ENCODE measurements at regions of chr12 and their contacts with region 1.

Region 1: GRCh38 chr12:40107098-40107802 is 1.4 kb upstream of the SLC2A13 start:
- DNase-seq: peak; percentile 69
- H3K4me3 Mint-ChIP-seq: peak overlapping the region; percentile 80
- H3K27ac Mint-ChIP-seq: peak overlapping the region; percentile 26
- H3K4me1 Mint-ChIP-seq: peaks cover 30% of the 10 kb centered on the region
- H3K27me3 Mint-ChIP-seq: peaks cover 47% of the 10 kb centered on the region

Region 2: GRCh38 chr12:38316391-38317129 is 1790.7 kb before region 1 on chr12 and contains the start of gene ALG10B:
- intact Hi-C with region 1: loop called (anchors 5 kb)
- DNase-seq: peak; percentile 90
- H3K4me3 Mint-ChIP-seq: peak within 1 kb of the TSS; percentile 97
- H3K27ac Mint-ChIP-seq: peak within 1 kb of the TSS; percentile 90
- H3K4me1 Mint-ChIP-seq: peaks cover 25% of the 10 kb centered on the region
- H3K27me3 Mint-ChIP-seq: no peaks in the 10 kb centered on the region
- total RNA-seq, gene ALG10B: 11.8 and 15.9 TPM in 2 replicates

Region 3: DNA sequence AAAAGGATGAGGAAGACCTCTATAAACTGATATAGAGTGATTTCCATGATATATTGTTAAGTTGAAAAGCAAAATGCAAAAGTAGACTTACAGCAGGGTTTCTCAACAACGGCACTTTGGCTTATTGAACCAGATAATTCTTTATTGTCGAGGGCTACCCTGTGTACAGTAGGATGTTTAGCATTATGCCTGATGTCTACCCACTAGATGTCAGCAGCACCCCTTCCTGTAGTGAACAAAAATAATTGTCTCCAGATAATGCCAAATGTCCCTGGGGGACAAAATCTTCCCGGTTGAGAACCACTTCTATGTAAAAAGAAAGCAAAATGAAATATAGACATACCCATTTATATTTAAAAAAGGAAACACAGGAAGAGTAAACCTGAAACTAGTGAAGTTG is 520.0 kb before region 1 on chr12:
- intact Hi-C with region 1: loop called (anchors 1 kb)
- DNase-seq: no peak
- H3K4me3 Mint-ChIP-seq: no peak overlapping the region
- H3K27ac Mint-ChIP-seq: no peak overlapping the region
- H3K4me1 Mint-ChIP-seq: peaks cover 16% of the 10 kb centered on the region
- H3K27me3 Mint-ChIP-seq: no peaks in the 10 kb centered on the region

Region 4: GRCh38 chr12:39764944-39765560 is 342.2 kb before region 1 on chr12:
- intact Hi-C with region 1: loop called (anchors 1 kb)
- DNase-seq: no peak
- H3K4me3 Mint-ChIP-seq: no peak overlapping the region
- H3K27ac Mint-ChIP-seq: no peak overlapping the region
- H3K4me1 Mint-ChIP-seq: no peaks in the 10 kb centered on the region
- H3K27me3 Mint-ChIP-seq: no peaks in the 10 kb centered on the region

Region 5: DNA sequence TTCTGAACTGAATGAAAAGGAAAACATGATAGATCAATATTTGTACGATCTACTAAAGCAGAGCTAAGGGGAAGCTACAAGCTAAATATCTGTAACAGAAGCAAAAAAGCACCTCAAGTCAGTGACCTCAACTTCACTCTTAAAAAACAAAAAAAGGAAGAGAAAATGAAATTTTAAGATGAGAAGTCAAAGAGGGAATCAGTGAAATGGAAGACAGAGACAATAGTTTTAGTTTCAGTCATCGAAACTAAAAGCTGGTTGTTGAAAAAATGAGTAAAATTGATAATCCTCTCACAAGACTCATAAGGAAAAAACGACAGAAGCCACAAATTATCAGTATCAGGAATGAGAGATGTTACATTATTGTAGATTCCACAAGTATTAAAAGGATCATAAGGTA is 10.6 kb after region 1 on chr12:
- intact Hi-C with region 1: loop called (anchors 1 kb)
- DNase-seq: no peak
- H3K4me3 Mint-ChIP-seq: no peak overlapping the region
- H3K27ac Mint-ChIP-seq: peak overlapping the region; percentile 45
- H3K4me1 Mint-ChIP-seq: peaks cover 8% of the 10 kb centered on the region
- H3K27me3 Mint-ChIP-seq: peaks cover 12% of the 10 kb centered on the region

Region 6: DNA sequence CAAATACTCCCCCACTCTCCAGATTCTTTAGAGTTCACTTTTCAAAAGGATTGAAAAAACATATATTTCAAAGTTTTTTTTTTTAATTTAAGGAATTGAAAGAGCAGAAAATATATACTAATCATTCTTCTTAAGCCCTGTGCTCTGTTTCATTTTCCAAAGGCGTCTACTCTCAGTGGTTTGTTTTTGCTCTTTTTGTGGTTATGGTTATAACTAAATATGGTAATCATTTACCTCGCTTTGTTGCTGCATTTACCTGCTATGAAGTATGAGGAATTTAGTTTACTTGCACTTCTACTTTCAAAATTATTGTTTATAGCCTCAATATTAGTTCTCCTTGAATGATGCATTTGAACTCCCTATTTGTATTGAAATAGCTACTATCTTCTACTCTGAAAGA is 61.6 kb after region 1 on chr12:
- intact Hi-C with region 1: loop called (anchors 2 kb)
- DNase-seq: no peak
- H3K4me3 Mint-ChIP-seq: no peak overlapping the region
- H3K27ac Mint-ChIP-seq: peak overlapping the region; percentile 41
- H3K4me1 Mint-ChIP-seq: peaks cover 19% of the 10 kb centered on the region
- H3K27me3 Mint-ChIP-seq: peaks cover 11% of the 10 kb centered on the region